Natural killer cell (primary cell): ENCODE measurements at regions of chr10 and their contacts with region 1.

Region 1: GRCh38 chr10:102394079-102394800 is 1.3 kb upstream of the NFKB2 start:
- DNase-seq: peak; percentile 99 to 100
- ATAC-seq: peak; percentile 74 to 91 (median 80)
- H3K4me3 ChIP-seq: peak overlapping the region; percentile 69
- H3K4me3 Mint-ChIP-seq: peak overlapping the region; percentile 98
- H3K27ac ChIP-seq: peak overlapping the region; percentile 91
- H3K27ac Mint-ChIP-seq: peak overlapping the region; percentile 99
- H3K4me1 ChIP-seq: peaks cover 40% of the 10 kb centered on the region
- H3K4me1 Mint-ChIP-seq: peaks cover 34 to 43% of the 10 kb centered on the region in 2 donors
- H3K27me3 ChIP-seq: no peaks in the 10 kb centered on the region
- H3K27me3 Mint-ChIP-seq: peaks cover 0 to 4% of the 10 kb centered on the region in 2 donors
- CTCF ChIP-seq: peak; percentile 31

Region 2: GRCh38 chr10:102101152-102101551 is 293.1 kb before region 1 on chr10:
- intact Hi-C with region 1: no loop called
- DNase-seq: no peak
- ATAC-seq: no peak
- H3K4me3 ChIP-seq: no peak overlapping the region
- H3K4me3 Mint-ChIP-seq: no peak overlapping the region
- H3K27ac ChIP-seq: no peak overlapping the region
- H3K27ac Mint-ChIP-seq: no peak overlapping the region
- H3K4me1 ChIP-seq: peaks cover 14% of the 10 kb centered on the region
- H3K4me1 Mint-ChIP-seq: peaks cover 9 to 19% of the 10 kb centered on the region in 2 donors
- H3K27me3 ChIP-seq: no peaks in the 10 kb centered on the region
- H3K27me3 Mint-ChIP-seq: no peaks in the 10 kb centered on the region
- CTCF ChIP-seq: no peak

Region 3: GRCh38 chr10:102358712-102359382 is 35.4 kb before region 1 on chr10:
- intact Hi-C with region 1: no loop called
- DNase-seq: no peak
- ATAC-seq: no peak
- H3K4me3 ChIP-seq: no peak overlapping the region
- H3K4me3 Mint-ChIP-seq: no peak overlapping the region
- H3K27ac ChIP-seq: no peak overlapping the region
- H3K27ac Mint-ChIP-seq: no peak overlapping the region
- H3K4me1 ChIP-seq: no peaks in the 10 kb centered on the region
- H3K4me1 Mint-ChIP-seq: peaks cover 0 to 5% of the 10 kb centered on the region in 2 donors
- H3K27me3 ChIP-seq: no peaks in the 10 kb centered on the region
- H3K27me3 Mint-ChIP-seq: no peaks in the 10 kb centered on the region
- CTCF ChIP-seq: no peak

Region 4: GRCh38 chr10:102420810-102421644 is 26.8 kb after region 1 on chr10 and contains the start of gene FBXL15:
- intact Hi-C with region 1: loop called (anchors 1 kb)
- DNase-seq: peak; percentile 93 to 96
- ATAC-seq: peak; percentile 77 to 91 (median 81)
- H3K4me3 ChIP-seq: peak within 1 kb of the TSS; percentile 83
- H3K4me3 Mint-ChIP-seq: peak within 1 kb of the TSS; percentile 98
- H3K27ac ChIP-seq: peak within 1 kb of the TSS; percentile 81
- H3K27ac Mint-ChIP-seq: peak within 1 kb of the TSS; percentile 91 to 97
- H3K4me1 ChIP-seq: peaks cover 39% of the 10 kb centered on the region
- H3K4me1 Mint-ChIP-seq: peaks cover 12 to 41% of the 10 kb centered on the region in 2 donors
- H3K27me3 ChIP-seq: peaks cover 21% of the 10 kb centered on the region
- H3K27me3 Mint-ChIP-seq: peaks cover 5 to 18% of the 10 kb centered on the region in 2 donors
- CTCF ChIP-seq: no peak
- total RNA-seq, gene FBXL15: 15.2 to 17.4 (median 15.5) TPM

Region 5: DNA sequence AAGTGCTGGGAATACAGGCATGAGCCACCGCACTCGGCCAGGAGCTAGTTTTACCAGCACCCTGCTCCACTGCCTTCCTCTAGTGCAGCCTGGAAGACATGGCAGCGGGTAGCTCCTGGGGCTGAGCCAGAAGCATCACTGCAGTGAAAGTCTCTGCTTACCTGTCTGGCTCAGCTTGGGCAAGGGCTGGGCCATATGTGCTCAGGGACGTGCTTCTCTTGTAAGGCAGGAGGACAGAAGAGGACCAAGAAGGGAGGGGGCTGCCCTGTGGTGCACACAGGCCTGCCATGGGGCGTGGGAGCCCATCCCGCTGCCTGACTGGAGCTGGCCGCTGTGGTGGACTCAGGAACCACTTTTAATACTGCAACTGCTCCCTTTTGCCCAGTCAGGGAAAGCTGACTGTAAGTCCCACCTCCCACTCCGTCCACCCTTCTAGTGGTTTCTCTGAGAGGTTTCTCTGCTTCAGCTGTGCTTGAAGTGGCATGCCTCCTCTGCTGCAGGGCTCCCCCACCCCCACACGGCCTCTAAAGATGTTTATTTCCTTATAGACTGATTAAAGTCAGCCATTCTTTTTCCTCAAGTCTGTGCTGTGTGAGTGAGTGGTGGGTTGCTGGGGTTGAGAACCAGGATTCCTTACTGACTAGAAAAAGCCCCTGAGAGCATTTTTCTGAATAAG is 82.4 kb after region 1 on chr10:
- intact Hi-C with region 1: loop called (anchors 1 kb)
- DNase-seq: peak in 1 of 2 donors; percentile 54
- ATAC-seq: no peak
- H3K4me3 ChIP-seq: no peak overlapping the region
- H3K4me3 Mint-ChIP-seq: no peak overlapping the region
- H3K27ac ChIP-seq: no peak overlapping the region
- H3K27ac Mint-ChIP-seq: peak overlapping the region in 1 of 2 donors; percentile 36
- H3K4me1 ChIP-seq: peaks cover 14% of the 10 kb centered on the region
- H3K4me1 Mint-ChIP-seq: peaks cover 6 to 15% of the 10 kb centered on the region in 2 donors
- H3K27me3 ChIP-seq: no peaks in the 10 kb centered on the region
- H3K27me3 Mint-ChIP-seq: no peaks in the 10 kb centered on the region
- CTCF ChIP-seq: no peak

Region 6: GRCh38 chr10:102583435-102584417 is 189.5 kb after region 1 on chr10:
- intact Hi-C with region 1: loop called (anchors 2 kb)
- DNase-seq: peak; percentile 69 to 91
- ATAC-seq: peak; percentile 91 to 99 (median 98)
- H3K4me3 ChIP-seq: no peak overlapping the region
- H3K4me3 Mint-ChIP-seq: no peak overlapping the region
- H3K27ac ChIP-seq: no peak overlapping the region
- H3K27ac Mint-ChIP-seq: no peak overlapping the region
- H3K4me1 ChIP-seq: peaks cover 4% of the 10 kb centered on the region
- H3K4me1 Mint-ChIP-seq: peaks cover 0 to 1% of the 10 kb centered on the region in 2 donors
- H3K27me3 ChIP-seq: no peaks in the 10 kb centered on the region
- H3K27me3 Mint-ChIP-seq: no peaks in the 10 kb centered on the region
- CTCF ChIP-seq: peak; percentile 88